MCF 10A (cell line): ENCODE measurements at regions of chr5 and their contacts with region 1.

Region 1: GRCh38 chr5:34449639-34450038 is 206.5 kb upstream of the RAI14 start:
- DNase-seq: no peak
- H3K4me3 Mint-ChIP-seq: no peak overlapping the region
- H3K27ac Mint-ChIP-seq: no peak overlapping the region
- H3K4me1 Mint-ChIP-seq: no peaks in the 10 kb centered on the region
- H3K27me3 Mint-ChIP-seq: no peaks in the 10 kb centered on the region
- CTCF ChIP-seq: no peak

Region 2: DNA sequence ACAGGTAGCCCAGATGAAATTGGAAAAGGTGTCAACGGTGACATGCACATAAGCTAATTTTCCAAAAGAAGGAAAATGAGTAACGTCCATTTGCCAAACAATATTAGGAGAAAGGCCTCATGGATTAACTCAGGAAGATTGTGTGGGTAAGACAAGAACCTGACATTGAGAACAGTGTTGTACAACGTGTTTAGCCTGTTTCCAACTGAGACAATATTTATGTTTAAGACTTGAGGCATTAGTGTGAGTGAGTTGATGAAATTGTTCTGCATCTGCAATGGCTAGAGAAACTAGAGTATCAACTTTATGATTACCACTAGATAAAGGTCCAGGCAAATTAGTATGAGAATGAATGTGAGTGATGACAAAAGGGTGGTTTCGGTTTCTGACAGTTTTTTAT is 15.2 kb after region 1 on chr5:
- CTCF ChIA-PET with region 1: interaction called, 12 read pairs
- POLR2A ChIA-PET with region 1: no interaction called
- intact Hi-C with region 1: no loop called
- DNase-seq: no peak
- H3K4me3 Mint-ChIP-seq: no peak overlapping the region
- H3K27ac Mint-ChIP-seq: no peak overlapping the region
- H3K4me1 Mint-ChIP-seq: peaks cover 11% of the 10 kb centered on the region
- H3K27me3 Mint-ChIP-seq: peaks cover 17% of the 10 kb centered on the region
- CTCF ChIP-seq: no peak